ENCODE measurements at regions of chr6 and their contacts with region 1.

Region 1: DNA sequence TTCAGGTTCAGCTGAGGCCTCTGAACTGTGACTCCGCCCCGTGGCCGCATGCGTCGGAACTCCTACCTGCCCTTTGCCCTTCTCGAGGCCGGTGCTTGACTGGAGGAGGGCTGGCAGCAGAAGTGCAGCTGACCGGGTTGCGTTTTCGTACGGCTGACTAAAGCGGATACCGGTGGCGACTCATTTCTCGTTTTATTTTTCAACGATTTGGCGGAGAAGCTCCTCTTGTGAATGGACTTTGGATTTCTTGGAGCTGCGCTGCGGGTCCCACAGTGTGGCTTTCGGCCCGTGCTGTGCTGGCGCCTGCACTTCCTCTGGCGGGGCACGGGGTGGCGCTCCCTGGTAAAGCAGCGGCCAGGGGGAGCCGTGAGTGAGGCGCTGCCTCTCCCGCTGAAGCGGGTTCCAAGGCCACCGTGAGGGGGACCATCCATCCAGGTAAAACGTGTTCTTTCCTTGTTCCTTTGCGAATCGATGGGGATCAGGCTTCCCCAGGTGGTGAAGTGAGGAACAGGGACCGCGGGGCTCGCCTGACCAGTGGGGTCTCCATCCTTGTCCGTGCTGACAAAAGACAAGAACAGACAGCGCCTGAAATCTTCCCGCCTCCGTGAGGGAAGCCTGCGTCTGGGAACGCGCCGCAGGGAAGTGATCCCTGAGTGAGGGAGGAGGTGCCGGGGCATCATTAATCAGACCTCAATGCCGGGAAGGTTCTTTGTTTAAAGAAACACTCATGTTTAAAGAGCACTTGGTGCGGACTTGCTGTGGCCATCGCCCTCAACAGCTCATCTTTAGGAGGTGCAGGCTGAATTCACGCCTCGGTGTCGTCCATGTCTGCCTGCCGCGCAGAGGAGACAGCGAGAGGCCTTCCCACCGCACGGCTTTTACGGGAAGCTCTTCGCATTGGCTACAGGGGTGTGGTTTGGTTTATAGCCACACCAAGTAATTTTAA is 38.8 kb downstream of the ERMARD start:
- H3K4me3 ChIP-seq: peak overlapping the region; percentile 43
- H3K27ac ChIP-seq: no peak overlapping the region; the same call in 1 of the 2 replicates
- H3K4me1 ChIP-seq: 0 out of 2 replicates have a peak, but pooled peaks cover 5% of the 10 kb centered on the region
- CTCF ChIP-seq: peak; percentile 98

Region 2: GRCh38 chr6:169800668-169801395 is 10.6 kb after region 1 on chr6:
- CTCF ChIA-PET with region 1: interaction called, 34 read pairs
- POLR2A ChIA-PET with region 1: interaction called, 7 read pairs
- H3K4me3 ChIP-seq: no peak overlapping the region
- H3K27ac ChIP-seq: peak overlapping the region; percentile 59; the same call in 1 of the 2 replicates
- H3K4me1 ChIP-seq: peaks cover 19% of the 10 kb centered on the region
- CTCF ChIP-seq: no peak

Region 3: GRCh38 chr6:169890049-169890448 is 99.8 kb after region 1 on chr6:
- CTCF ChIA-PET with region 1: no interaction called
- POLR2A ChIA-PET with region 1: no interaction called
- H3K4me3 ChIP-seq: no peak overlapping the region
- H3K27ac ChIP-seq: no peak overlapping the region
- H3K4me1 ChIP-seq: no peaks in the 10 kb centered on the region
- CTCF ChIP-seq: no peak